ENCODE measurements at regions of chr1 and their contacts with region 1.

Region 1: GRCh38 chr1:8348777-8349491 is 31.0 kb downstream of the SLC45A1 start:
- DNase-seq: peak; percentile 72 to 92
- H3K4me3 ChIP-seq: no peak overlapping the region
- H3K27ac ChIP-seq: no peak overlapping the region
- H3K4me1 ChIP-seq: peaks cover 0 to 11% (median 3%) of the 10 kb centered on the region in 4 experiments; a peak in 5 of 7 replicates
- H3K27me3 ChIP-seq: no peaks in the 10 kb centered on the region
- CTCF ChIP-seq: peak; percentile 81 to 89 (median 89)
- EP300 ChIP-seq: peak in 1 of 2 experiments; percentile 85; a peak in 1 of 3 replicates
- POLR2A ChIP-seq: no peak; a peak in 1 of 3 replicates
- RAD21 ChIP-seq: peak; percentile 91 to 95

Region 2: GRCh38 chr1:7975212-7975865 is 373.6 kb before region 1 on chr1:
- CTCF ChIA-PET with region 1: interaction called, 22 read pairs
- POLR2A ChIA-PET with region 1: interaction called, 3 read pairs
- DNase-seq: peak in 1 of 2 experiments; percentile 90
- H3K4me3 ChIP-seq: no peak overlapping the region
- H3K27ac ChIP-seq: no peak overlapping the region
- H3K4me1 ChIP-seq: no peaks in the 10 kb centered on the region
- H3K27me3 ChIP-seq: no peaks in the 10 kb centered on the region
- CTCF ChIP-seq: peak; percentile 97 to 100 (median 100)
- EP300 ChIP-seq: no peak
- POLR2A ChIP-seq: no peak
- RAD21 ChIP-seq: peak; percentile 93

Region 3: GRCh38 chr1:7983086-7983778 is 365.7 kb before region 1 on chr1:
- CTCF ChIA-PET with region 1: interaction called, 22 read pairs
- POLR2A ChIA-PET with region 1: no interaction called
- DNase-seq: no peak
- H3K4me3 ChIP-seq: no peak overlapping the region
- H3K27ac ChIP-seq: no peak overlapping the region
- H3K4me1 ChIP-seq: peaks cover 0 to 3% (median 1%) of the 10 kb centered on the region in 4 experiments; a peak in 1 of 7 replicates
- H3K27me3 ChIP-seq: no peaks in the 10 kb centered on the region
- CTCF ChIP-seq: no peak
- EP300 ChIP-seq: no peak
- POLR2A ChIP-seq: no peak
- RAD21 ChIP-seq: no peak

Region 4: DNA sequence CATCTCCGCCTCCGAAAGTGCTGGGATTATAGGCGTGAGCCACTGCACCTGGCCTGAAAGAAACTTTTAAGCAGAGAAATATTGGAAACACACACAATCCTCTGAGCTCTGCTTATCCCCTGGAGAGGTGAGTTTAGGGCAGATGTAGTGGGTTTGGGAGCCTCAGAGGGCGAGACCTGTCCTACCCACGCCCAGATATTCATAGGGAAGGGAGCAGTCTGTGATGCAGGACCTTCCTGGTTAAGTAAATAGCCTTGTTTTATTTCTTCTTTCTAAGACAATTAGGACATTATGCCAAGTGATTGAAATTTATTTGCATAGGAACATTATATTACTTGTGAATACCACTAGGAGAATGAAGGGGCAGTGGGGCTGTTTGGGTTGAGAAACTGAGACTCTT is 49.0 kb before region 1 on chr1:
- CTCF ChIA-PET with region 1: no interaction called
- POLR2A ChIA-PET with region 1: no interaction called
- DNase-seq: no peak
- H3K4me3 ChIP-seq: no peak overlapping the region
- H3K27ac ChIP-seq: no peak overlapping the region
- H3K4me1 ChIP-seq: peaks cover 0 to 12% (median 2%) of the 10 kb centered on the region in 4 experiments; a peak in 2 of 7 replicates
- H3K27me3 ChIP-seq: no peaks in the 10 kb centered on the region
- CTCF ChIP-seq: no peak
- EP300 ChIP-seq: no peak
- POLR2A ChIP-seq: no peak
- RAD21 ChIP-seq: no peak

Region 5: GRCh38 chr1:8329439-8329838 is 19.5 kb before region 1 on chr1:
- CTCF ChIA-PET with region 1: interaction called, 20 read pairs
- POLR2A ChIA-PET with region 1: interaction called, 4 read pairs
- DNase-seq: no peak
- H3K4me3 ChIP-seq: no peak overlapping the region
- H3K27ac ChIP-seq: no peak overlapping the region
- H3K4me1 ChIP-seq: no peaks in the 10 kb centered on the region; a peak in 1 of 7 replicates
- H3K27me3 ChIP-seq: no peaks in the 10 kb centered on the region
- CTCF ChIP-seq: no peak
- EP300 ChIP-seq: no peak
- POLR2A ChIP-seq: no peak
- RAD21 ChIP-seq: no peak

Region 6: DNA sequence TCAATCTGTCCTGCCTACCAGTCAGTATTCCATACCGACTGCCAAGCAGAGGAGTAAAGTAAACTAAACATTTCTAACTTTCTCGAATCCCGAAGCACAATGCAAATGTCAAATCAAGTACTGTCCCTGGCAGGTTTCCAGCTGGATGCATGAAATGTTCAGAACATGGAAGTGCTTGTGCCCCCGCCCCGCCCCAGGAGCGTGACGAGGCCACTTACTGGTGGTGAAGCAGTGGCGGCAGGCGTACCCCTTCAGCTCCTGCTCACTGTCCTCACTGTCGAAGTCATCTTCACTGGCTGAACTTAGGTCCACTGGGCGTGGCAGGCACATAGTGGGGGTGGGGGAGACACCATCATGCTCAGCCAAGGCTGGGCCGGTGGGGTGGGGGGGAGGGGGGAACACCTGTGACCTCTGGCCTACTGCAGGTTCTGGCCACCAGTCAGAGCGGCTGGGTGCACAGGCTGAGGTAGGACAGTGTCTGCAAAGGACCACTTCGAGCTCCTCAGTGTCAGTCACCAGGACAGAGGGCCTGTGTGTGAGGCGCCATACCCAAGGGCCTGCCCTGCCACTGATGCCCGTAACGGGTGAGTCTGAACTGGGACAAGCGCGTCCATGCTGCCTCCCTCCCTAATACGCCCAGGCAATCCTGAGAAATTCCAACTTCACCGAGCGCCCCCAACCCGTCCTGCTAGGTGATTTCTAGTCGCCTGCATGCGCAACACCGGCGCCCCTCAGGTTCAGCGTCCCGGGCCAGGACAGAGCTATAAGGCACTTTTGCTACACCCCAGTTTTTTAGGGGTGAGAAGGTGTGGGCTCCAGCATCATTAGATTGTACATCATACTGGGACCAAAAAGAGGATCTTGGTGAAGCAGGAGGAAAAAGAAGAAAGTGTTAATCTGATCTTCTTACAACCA is 15.9 kb after region 1 on chr1:
- CTCF ChIA-PET with region 1: interaction called, 42 read pairs
- POLR2A ChIA-PET with region 1: interaction called, 7 read pairs
- DNase-seq: no peak
- H3K4me3 ChIP-seq: no peak overlapping the region
- H3K27ac ChIP-seq: no peak overlapping the region
- H3K4me1 ChIP-seq: peaks cover 2 to 5% (median 3%) of the 10 kb centered on the region in 4 experiments; a peak in 4 of 7 replicates
- H3K27me3 ChIP-seq: no peaks in the 10 kb centered on the region
- CTCF ChIP-seq: no peak
- EP300 ChIP-seq: no peak
- POLR2A ChIP-seq: no peak
- RAD21 ChIP-seq: no peak

Region 7: DNA sequence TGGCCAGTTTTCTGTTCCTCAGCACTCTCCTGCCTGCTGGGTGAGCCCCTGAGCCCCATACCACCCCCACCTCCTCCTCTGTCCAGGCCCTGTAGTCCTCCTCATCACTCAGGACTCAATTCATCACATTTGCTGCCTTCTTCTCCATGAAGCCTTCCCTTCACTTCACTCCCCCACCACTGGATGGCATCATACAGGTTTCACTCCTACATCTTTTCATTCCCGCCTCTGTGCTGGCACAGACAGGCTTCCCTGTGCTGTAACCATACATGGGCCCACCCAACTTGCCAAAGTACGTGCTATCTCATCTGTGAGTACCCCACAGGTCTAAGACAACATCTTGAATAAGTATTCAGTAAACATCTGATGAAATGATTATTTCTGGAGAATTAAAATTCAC is 25.9 kb after region 1 on chr1:
- CTCF ChIA-PET with region 1: interaction called, 32 read pairs
- POLR2A ChIA-PET with region 1: no interaction called
- DNase-seq: no peak
- H3K4me3 ChIP-seq: no peak overlapping the region
- H3K27ac ChIP-seq: 0 out of 2 replicates have a peak overlapping the region, but pooled peaks have one; percentile 11
- H3K4me1 ChIP-seq: peaks cover 28 to 43% (median 41%) of the 10 kb centered on the region in 4 experiments
- H3K27me3 ChIP-seq: no peaks in the 10 kb centered on the region
- CTCF ChIP-seq: peak; percentile 47 to 79 (median 56)
- EP300 ChIP-seq: no peak
- POLR2A ChIP-seq: no peak
- RAD21 ChIP-seq: peak; percentile 57 to 66; a peak in 3 of 4 replicates

Region 8: GRCh38 chr1:8439015-8439702 is 90.2 kb after region 1 on chr1:
- CTCF ChIA-PET with region 1: interaction called, 11 read pairs
- POLR2A ChIA-PET with region 1: no interaction called
- DNase-seq: peak in 1 of 2 experiments; percentile 71
- H3K4me3 ChIP-seq: no peak overlapping the region
- H3K27ac ChIP-seq: peak overlapping the region; percentile 31; the same call in 1 of the 2 replicates
- H3K4me1 ChIP-seq: peaks cover 6 to 24% (median 21%) of the 10 kb centered on the region in 4 experiments; a peak in 6 of 7 replicates
- H3K27me3 ChIP-seq: no peaks in the 10 kb centered on the region
- CTCF ChIP-seq: peak; percentile 35 to 63 (median 37); a peak in 3 of 4 replicates
- EP300 ChIP-seq: no peak
- POLR2A ChIP-seq: no peak
- RAD21 ChIP-seq: peak; percentile 25 to 49; a peak in 3 of 4 replicates

Region 9: DNA sequence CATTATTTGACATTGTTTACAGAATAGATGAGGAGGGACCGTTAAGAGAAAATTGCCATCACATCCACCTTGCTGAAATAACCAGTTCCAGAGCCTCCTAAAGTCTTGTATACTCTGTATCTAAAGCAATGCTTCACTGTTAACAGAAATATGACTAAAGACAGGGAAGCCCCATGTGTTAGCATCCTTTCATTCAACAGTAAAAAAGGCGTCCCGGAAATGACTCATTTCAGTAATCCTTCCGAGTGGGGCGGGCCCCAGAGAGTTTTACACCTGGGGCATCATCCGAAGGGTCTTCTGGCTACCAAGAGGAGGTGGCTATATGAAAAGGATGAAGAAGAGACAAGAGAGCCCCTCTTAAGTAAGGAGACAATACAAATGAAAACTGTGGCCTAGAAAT is 196.1 kb after region 1 on chr1:
- CTCF ChIA-PET with region 1: no interaction called
- POLR2A ChIA-PET with region 1: no interaction called
- DNase-seq: no peak
- H3K4me3 ChIP-seq: no peak overlapping the region
- H3K27ac ChIP-seq: no peak overlapping the region
- H3K4me1 ChIP-seq: no peaks in the 10 kb centered on the region
- H3K27me3 ChIP-seq: no peaks in the 10 kb centered on the region
- CTCF ChIP-seq: no peak
- EP300 ChIP-seq: no peak
- POLR2A ChIP-seq: no peak
- RAD21 ChIP-seq: no peak

Measured in H1 (cell line).